PC-3 (cell line): ENCODE measurements at regions of chr14 and their contacts with region 1.

Region 1: GRCh38 chr14:69242311-69243224 is 17.4 kb upstream of the GALNT16 start:
- DNase-seq: peak; percentile 79
- ATAC-seq: peak; percentile 89
- H3K4me3 ChIP-seq: no peak overlapping the region
- H3K27ac ChIP-seq: no peak overlapping the region
- H3K4me1 ChIP-seq: no peaks in the 10 kb centered on the region
- H3K27me3 ChIP-seq: no peaks in the 10 kb centered on the region
- CTCF ChIP-seq: peak; percentile 93

Region 2: GRCh38 chr14:69153131-69153872 is 89.3 kb before region 1 on chr14:
- CTCF ChIA-PET with region 1: no interaction called
- POLR2A ChIA-PET with region 1: no interaction called
- intact Hi-C with region 1: no loop called
- DNase-seq: peak; percentile 91
- ATAC-seq: peak; percentile 82
- H3K4me3 ChIP-seq: peak overlapping the region; percentile 94
- H3K27ac ChIP-seq: no peak overlapping the region
- H3K4me1 ChIP-seq: peaks cover 43% of the 10 kb centered on the region
- H3K27me3 ChIP-seq: no peaks in the 10 kb centered on the region
- CTCF ChIP-seq: no peak

Region 3: DNA sequence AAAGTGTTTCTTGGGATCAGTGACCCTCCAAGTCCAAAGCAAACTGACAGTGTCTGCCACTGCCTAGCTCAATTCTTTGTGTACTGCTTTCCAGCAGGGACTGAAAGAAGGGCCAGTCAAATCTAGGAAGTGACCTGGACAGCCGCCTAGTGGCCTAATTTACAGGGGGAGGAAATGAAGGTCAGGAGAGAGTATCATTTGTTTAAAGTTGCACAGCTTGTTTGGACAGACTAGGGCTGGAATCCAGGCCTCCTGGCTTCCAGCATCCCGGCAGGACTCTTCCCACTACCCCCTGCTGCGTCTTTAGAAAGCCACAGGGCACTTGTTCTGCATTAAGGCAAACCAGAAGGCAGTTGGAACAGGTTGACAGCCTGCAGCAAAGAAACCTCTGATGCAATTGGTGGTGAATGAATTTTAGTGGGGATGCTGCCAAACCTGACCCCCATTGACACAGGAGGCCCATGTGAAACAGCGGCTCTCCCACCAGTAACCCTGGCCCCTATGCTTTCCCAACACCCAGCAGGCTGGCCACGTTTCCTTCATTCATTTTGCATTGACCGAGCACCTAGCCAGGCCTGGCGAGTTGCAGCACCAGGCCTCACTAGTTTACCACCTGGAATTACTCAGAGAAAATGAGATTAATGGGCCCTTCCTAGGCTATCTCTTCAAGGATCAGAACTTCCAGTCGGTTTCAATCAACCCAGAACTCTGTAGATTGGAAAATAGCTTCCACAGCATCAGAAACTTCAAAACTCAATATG is 45.6 kb after region 1 on chr14:
- CTCF ChIA-PET with region 1: interaction called, 12 read pairs
- POLR2A ChIA-PET with region 1: no interaction called
- intact Hi-C with region 1: loop called (anchors 2 kb)
- DNase-seq: peak; percentile 47
- ATAC-seq: peak; percentile 74
- H3K4me3 ChIP-seq: no peak overlapping the region
- H3K27ac ChIP-seq: no peak overlapping the region
- H3K4me1 ChIP-seq: no peaks in the 10 kb centered on the region
- H3K27me3 ChIP-seq: no peaks in the 10 kb centered on the region
- CTCF ChIP-seq: peak; percentile 48; the same call in 1 of the 2 replicates

Region 4: GRCh38 chr14:69335371-69335771 is 92.8 kb after region 1 on chr14:
- CTCF ChIA-PET with region 1: no interaction called
- POLR2A ChIA-PET with region 1: no interaction called
- intact Hi-C with region 1: no loop called
- DNase-seq: peak; percentile 58
- ATAC-seq: peak; percentile 40; the same call in 1 of the 2 replicates
- H3K4me3 ChIP-seq: no peak overlapping the region
- H3K27ac ChIP-seq: no peak overlapping the region
- H3K4me1 ChIP-seq: no peaks in the 10 kb centered on the region
- H3K27me3 ChIP-seq: peaks cover 9% of the 10 kb centered on the region; the same call in 1 of the 2 replicates
- CTCF ChIP-seq: no peak

Region 5: GRCh38 chr14:69346710-69347109 is 104.1 kb after region 1 on chr14:
- CTCF ChIA-PET with region 1: interaction called, 4 read pairs
- POLR2A ChIA-PET with region 1: no interaction called
- intact Hi-C with region 1: loop called (anchors 1 kb)
- DNase-seq: peak; percentile 42
- ATAC-seq: peak; percentile 68
- H3K4me3 ChIP-seq: no peak overlapping the region
- H3K27ac ChIP-seq: no peak overlapping the region
- H3K4me1 ChIP-seq: no peaks in the 10 kb centered on the region
- H3K27me3 ChIP-seq: no peaks in the 10 kb centered on the region
- CTCF ChIP-seq: peak; percentile 85

Region 6: DNA sequence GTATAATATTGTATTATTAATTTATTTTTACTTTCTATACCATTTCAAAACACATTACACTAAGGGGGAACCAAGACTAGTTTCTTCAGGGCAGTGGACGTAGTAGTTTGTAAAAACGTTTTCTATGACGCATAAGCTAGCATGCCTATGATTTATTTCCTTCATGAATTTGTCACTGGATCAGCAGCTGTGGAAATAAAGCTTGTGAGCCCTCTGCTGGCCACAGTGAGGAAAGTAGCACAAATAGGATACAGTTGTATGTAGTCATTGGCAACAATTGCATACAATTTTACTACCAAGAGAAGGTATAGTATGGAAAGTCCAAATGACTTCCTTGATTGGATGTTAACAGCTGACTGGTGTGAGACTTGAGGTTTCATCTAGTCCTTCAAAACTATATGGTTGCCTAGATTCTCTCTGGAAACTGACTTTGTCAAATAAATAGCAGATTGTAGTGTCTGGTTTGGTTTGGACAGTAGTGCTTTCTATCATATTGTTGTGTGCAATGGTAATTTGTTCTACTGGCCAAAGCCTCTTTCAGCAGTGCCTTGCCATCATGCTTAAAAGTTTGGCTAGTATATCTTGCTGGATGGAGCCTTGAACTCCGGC is 217.6 kb after region 1 on chr14:
- CTCF ChIA-PET with region 1: interaction called, 5 read pairs
- POLR2A ChIA-PET with region 1: no interaction called
- intact Hi-C with region 1: loop called (anchors 1 kb)
- DNase-seq: peak; percentile 91
- ATAC-seq: peak; percentile 46
- H3K4me3 ChIP-seq: no peak overlapping the region
- H3K27ac ChIP-seq: no peak overlapping the region
- H3K4me1 ChIP-seq: peaks cover 11% of the 10 kb centered on the region
- H3K27me3 ChIP-seq: no peaks in the 10 kb centered on the region
- CTCF ChIP-seq: peak; percentile 94

Region 7: DNA sequence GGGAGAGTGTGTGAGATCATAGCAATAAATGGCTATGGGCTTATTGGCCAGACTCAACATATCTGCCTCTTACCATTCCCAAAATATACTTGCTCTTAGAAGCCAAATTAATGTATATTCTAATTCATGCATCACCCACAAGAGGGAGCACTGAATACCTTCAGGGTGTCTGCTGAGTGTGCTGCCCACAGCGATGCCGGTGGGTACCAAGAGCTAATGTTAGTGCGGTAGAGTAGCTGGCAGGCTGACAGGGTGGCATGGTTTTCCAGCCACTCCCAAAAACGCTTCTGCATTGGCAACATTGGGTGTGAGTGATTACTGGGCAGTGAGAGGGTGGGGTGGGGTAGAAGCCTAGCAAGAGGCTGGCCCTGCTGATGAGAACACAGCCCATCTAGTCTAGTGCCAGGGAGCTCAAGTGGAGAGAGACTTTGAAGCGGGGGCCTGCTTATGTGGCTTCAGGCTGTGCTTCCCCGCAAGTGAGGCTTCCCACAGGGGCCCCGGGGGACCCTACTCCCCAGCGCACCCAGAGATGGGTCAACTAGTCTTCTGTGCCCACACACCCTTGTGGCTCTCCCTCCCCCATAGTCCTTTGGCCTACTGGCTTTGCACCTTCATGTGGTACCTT is 232.7 kb after region 1 on chr14:
- CTCF ChIA-PET with region 1: interaction called, 3 read pairs
- POLR2A ChIA-PET with region 1: no interaction called
- intact Hi-C with region 1: loop called (anchors 5 kb)
- DNase-seq: peak; percentile 66
- ATAC-seq: peak; percentile 51
- H3K4me3 ChIP-seq: no peak overlapping the region
- H3K27ac ChIP-seq: no peak overlapping the region
- H3K4me1 ChIP-seq: peaks cover 11% of the 10 kb centered on the region
- H3K27me3 ChIP-seq: no peaks in the 10 kb centered on the region
- CTCF ChIP-seq: peak; percentile 76

Region 8: DNA sequence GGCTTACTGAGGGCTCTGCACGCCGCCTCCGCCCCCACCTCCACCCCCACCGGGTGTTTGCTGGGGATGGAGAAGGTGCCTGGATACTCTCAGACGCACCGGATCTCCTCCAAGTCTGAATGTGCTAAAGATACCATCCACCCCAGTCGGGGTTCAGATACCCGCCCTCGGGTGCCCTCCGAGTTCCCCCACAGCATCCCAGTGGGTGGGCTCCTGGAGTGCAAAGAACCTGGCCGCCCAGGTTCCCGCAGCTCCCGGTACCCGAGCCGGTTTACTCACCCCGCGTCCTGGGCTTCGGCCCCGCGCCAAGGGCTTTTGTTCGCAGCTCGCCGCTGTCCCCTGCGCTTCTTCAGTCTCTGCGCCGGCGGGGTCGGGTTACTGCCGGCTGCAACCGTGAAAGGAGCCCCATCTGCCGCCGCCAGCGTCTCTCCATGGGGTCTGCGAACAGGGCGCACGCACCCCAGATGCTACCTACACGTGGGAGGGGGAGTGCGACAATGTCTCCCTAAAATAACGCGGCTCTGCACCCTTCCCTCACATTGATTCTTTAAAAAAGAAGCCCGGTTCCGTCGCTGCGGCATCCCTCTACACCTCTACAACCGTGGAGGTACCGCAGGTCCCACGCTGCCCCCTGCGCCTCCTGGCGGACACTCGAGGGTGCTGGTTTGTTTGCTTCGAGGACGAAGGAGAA is 331.8 kb after region 1 on chr14 and contains the start of gene CCDC177:
- CTCF ChIA-PET with region 1: interaction called, 3 read pairs
- POLR2A ChIA-PET with region 1: no interaction called
- intact Hi-C with region 1: loop called (anchors 2 kb)
- DNase-seq: peak; percentile 79
- ATAC-seq: peak; percentile 86
- H3K4me3 ChIP-seq: peak within 1 kb of the TSS; percentile 73
- H3K27ac ChIP-seq: no peak within 1 kb of the TSS
- H3K4me1 ChIP-seq: peaks cover 9% of the 10 kb centered on the region
- H3K27me3 ChIP-seq: peaks cover 55% of the 10 kb centered on the region
- CTCF ChIP-seq: peak; percentile 93
- total RNA-seq, gene CCDC177: not detected in 2 replicates